A549 (cell line): ENCODE measurements at regions of chr5 and their contacts with region 1.

Region 1: GRCh38 chr5:10856683-10857337 is 95.8 kb upstream of the DAP start:
- DNase-seq: peak; percentile 14 to 28
- ATAC-seq: peak in 1 of 2 experiments; percentile 86; a peak in 4 of 6 replicates
- H3K4me3 ChIP-seq: no peak overlapping the region
- H3K27ac ChIP-seq: no peak overlapping the region
- H3K4me1 ChIP-seq: no peaks in the 10 kb centered on the region
- CTCF ChIP-seq: peak; percentile 52; the same call in 2 of the 3 replicates
- EP300 ChIP-seq: no peak
- POLR2A ChIP-seq: no peak
- RAD21 ChIP-seq: peak; percentile 32 to 37; a peak in 3 of 5 replicates

Region 2: GRCh38 chr5:10528056-10528816 is 328.6 kb before region 1 on chr5:
- CTCF ChIA-PET with region 1: no interaction called
- POLR2A ChIA-PET with region 1: no interaction called
- DNase-seq: no peak
- ATAC-seq: peak in 1 of 2 experiments; percentile 31; a peak in 2 of 6 replicates
- H3K4me3 ChIP-seq: no peak overlapping the region
- H3K27ac ChIP-seq: peak overlapping the region; percentile 43 to 71; a peak in 5 of 6 replicates
- H3K4me1 ChIP-seq: peaks cover 30% of the 10 kb centered on the region
- CTCF ChIP-seq: no peak
- EP300 ChIP-seq: no peak
- POLR2A ChIP-seq: no peak
- RAD21 ChIP-seq: no peak; a peak in 1 of 5 replicates

Region 3: GRCh38 chr5:10868956-10869355 is 12.1 kb after region 1 on chr5:
- CTCF ChIA-PET with region 1: interaction called, 16 read pairs
- POLR2A ChIA-PET with region 1: no interaction called
- DNase-seq: no peak
- ATAC-seq: no peak
- H3K4me3 ChIP-seq: no peak overlapping the region
- H3K27ac ChIP-seq: no peak overlapping the region
- H3K4me1 ChIP-seq: no peaks in the 10 kb centered on the region
- CTCF ChIP-seq: no peak
- EP300 ChIP-seq: no peak
- POLR2A ChIP-seq: no peak
- RAD21 ChIP-seq: no peak

Region 4: GRCh38 chr5:10885026-10885425 is 28.2 kb after region 1 on chr5:
- CTCF ChIA-PET with region 1: interaction called, 10 read pairs
- POLR2A ChIA-PET with region 1: no interaction called
- DNase-seq: no peak
- ATAC-seq: no peak
- H3K4me3 ChIP-seq: no peak overlapping the region
- H3K27ac ChIP-seq: no peak overlapping the region
- H3K4me1 ChIP-seq: no peaks in the 10 kb centered on the region
- CTCF ChIP-seq: no peak
- EP300 ChIP-seq: no peak
- POLR2A ChIP-seq: no peak
- RAD21 ChIP-seq: no peak